ENCODE measurements at regions of chr3 and their contacts with region 1.

Region 1: GRCh38 chr3:121545574-121546455 is at the start of gene POLQ:
- DNase-seq: peak; percentile 94
- ATAC-seq: peak; percentile 99
- total RNA-seq, gene POLQ: 0.43 TPM

Region 2: GRCh38 chr3:121648219-121648958 is 102.6 kb after region 1 on chr3:
- intact Hi-C with region 1: loop called (anchors 5 kb)
- DNase-seq: no peak
- ATAC-seq: peak; percentile 97

Region 3: GRCh38 chr3:121995161-121996137 is 449.6 kb after region 1 on chr3:
- intact Hi-C with region 1: loop called (anchors 2 kb)
- DNase-seq: peak; percentile 70
- ATAC-seq: peak; percentile 85

Measured in Right ventricle myocardium superior (tissue), 1 donor.